ENCODE measurements at regions of chr5 and their contacts with region 1.

Region 1: GRCh38 chr5:174045470-174046025 is at the start of gene NSG2:
- DNase-seq: peak; percentile 83
- ATAC-seq: peak; percentile 100
- H3K4me3 ChIP-seq: no peak within 1 kb of the TSS
- H3K27ac ChIP-seq: no peak within 1 kb of the TSS
- H3K4me1 ChIP-seq: no peaks in the 10 kb centered on the region
- H3K27me3 ChIP-seq: no peaks in the 10 kb centered on the region
- CTCF ChIP-seq: peak; percentile 93
- EP300 ChIP-seq: no peak
- POLR2A ChIP-seq: no peak
- RAD21 ChIP-seq: peak; percentile 96
- total RNA-seq, gene NSG2: not detected in 2 replicates

Region 2: GRCh38 chr5:174065528-174066197 is 20.1 kb after region 1 on chr5:
- CTCF ChIA-PET with region 1: no interaction called
- POLR2A ChIA-PET with region 1: no interaction called
- in situ Hi-C with region 1: no loop called
- intact Hi-C with region 1: no loop called
- DNase-seq: peak; percentile 73
- ATAC-seq: peak; percentile 85
- H3K4me3 ChIP-seq: no peak overlapping the region
- H3K27ac ChIP-seq: no peak overlapping the region
- H3K4me1 ChIP-seq: peaks cover 12% of the 10 kb centered on the region
- H3K27me3 ChIP-seq: no peaks in the 10 kb centered on the region
- CTCF ChIP-seq: no peak
- EP300 ChIP-seq: no peak
- POLR2A ChIP-seq: no peak
- RAD21 ChIP-seq: no peak

Region 3: DNA sequence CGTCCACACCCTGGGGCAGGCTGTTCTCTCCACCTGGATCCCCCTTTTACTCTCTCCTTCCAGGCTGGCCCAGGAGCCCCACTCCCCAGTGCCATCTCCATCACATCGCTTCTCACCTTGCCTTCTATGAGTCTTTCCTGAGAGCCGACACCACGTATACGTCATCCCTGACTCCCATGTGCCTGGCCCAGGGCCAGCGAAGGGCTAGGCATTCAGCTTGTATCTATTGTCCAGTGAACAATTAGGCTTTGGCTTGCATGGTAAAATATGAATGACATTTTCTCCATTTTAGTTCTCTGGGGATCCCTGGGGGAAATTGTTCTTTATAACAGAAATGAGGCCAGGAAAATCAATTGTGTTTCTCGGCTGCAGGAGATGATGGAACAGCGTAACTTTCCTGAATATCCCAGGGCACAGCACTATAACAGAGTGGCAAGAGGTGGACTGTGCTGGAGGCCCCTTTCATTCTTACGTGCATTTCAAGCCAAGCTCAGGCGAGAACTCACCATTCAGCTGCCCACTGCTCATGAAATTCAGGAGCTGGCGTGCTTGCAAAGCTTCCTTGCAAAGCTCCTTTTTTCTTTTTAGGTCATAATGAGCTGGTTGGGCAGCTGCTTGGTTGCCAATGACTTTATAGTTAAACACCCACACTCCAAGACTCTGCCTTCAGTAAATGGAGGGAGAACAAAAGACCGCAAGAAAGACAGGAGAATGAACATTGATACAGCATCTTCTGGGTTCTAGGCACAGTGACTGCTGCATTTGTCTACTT is 37.7 kb after region 1 on chr5:
- CTCF ChIA-PET with region 1: no interaction called
- POLR2A ChIA-PET with region 1: no interaction called
- in situ Hi-C with region 1: no loop called
- intact Hi-C with region 1: no loop called
- DNase-seq: no peak
- ATAC-seq: no peak
- H3K4me3 ChIP-seq: no peak overlapping the region
- H3K27ac ChIP-seq: no peak overlapping the region
- H3K4me1 ChIP-seq: peaks cover 8% of the 10 kb centered on the region
- H3K27me3 ChIP-seq: peaks cover 0 to 7% of the 10 kb centered on the region in 2 experiments; a peak in 1 of 5 replicates
- CTCF ChIP-seq: no peak
- EP300 ChIP-seq: no peak
- POLR2A ChIP-seq: no peak
- RAD21 ChIP-seq: no peak

Region 4: GRCh38 chr5:174317259-174317894 is 271.8 kb after region 1 on chr5:
- CTCF ChIA-PET with region 1: interaction called, 39 read pairs
- POLR2A ChIA-PET with region 1: interaction called, 3 read pairs
- in situ Hi-C with region 1: loop called (anchors 5 kb)
- intact Hi-C with region 1: loop called (anchors 1 kb)
- DNase-seq: peak; percentile 23
- ATAC-seq: peak; percentile 96
- H3K4me3 ChIP-seq: no peak overlapping the region
- H3K27ac ChIP-seq: no peak overlapping the region
- H3K4me1 ChIP-seq: no peaks in the 10 kb centered on the region
- H3K27me3 ChIP-seq: peaks cover 6 to 37% of the 10 kb centered on the region in 2 experiments; a peak in 4 of 5 replicates
- CTCF ChIP-seq: peak; percentile 88
- EP300 ChIP-seq: no peak
- POLR2A ChIP-seq: no peak
- RAD21 ChIP-seq: peak; percentile 85

Measured in HepG2 (cell line).